HCT116 (cell line): ENCODE measurements at regions of chr3 and their contacts with region 1.

Region 1: GRCh38 chr3:14780927-14781507 is 37.7 kb upstream of the FGD5 start:
- DNase-seq: peak; percentile 74
- ATAC-seq: peak; percentile 100
- H3K4me3 ChIP-seq: no peak overlapping the region
- H3K27ac ChIP-seq: no peak overlapping the region
- H3K4me1 ChIP-seq: no peaks in the 10 kb centered on the region
- H3K27me3 ChIP-seq: no peaks in the 10 kb centered on the region
- CTCF ChIP-seq: peak; percentile 86 to 88 (median 88)
- POLR2A ChIP-seq: no peak
- RAD21 ChIP-seq: peak; percentile 89

Region 2: DNA sequence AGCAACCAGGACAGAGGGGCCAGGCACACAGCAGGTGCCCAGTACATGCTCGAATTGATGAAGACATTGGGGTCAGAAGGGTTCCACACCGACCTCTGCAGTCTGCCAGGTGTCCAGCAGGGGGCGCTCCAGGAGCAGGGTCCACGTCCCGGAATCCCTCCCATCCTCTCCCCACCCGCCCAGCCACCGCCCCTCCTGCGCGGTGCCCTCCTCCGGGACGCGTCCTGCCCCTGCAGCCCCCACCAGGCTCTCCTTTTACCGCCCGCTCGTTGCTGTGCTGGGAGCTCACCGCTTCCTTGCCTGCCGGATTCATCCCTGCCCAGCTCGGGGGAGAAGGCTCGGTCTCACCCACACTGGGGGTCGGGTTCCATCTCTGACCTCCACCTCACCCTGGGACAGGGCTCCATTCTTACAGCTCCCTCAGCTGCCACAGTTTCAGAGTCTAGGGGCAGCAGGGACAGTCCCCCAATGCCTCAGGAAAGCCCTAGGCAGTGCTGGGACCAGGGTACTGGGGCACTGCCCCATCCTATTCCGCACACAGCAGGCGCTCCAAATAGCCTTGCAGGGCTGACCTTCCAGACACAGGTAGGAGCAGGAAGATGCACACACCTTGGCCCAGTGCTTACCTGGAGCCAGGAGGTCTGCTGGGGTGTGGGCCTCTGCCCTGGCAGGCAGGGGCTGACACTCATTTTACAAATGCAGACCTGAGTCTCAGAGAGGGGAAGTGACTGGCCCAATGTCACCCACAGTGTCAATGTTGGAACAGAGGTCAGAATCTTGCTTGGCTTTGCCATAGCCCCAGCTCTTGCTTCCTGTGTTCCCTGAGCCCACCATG is 271.8 kb before region 1 on chr3:
- CTCF ChIA-PET with region 1: no interaction called
- POLR2A ChIA-PET with region 1: no interaction called
- RAD21 ChIA-PET with region 1: no interaction called
- intact Hi-C with region 1: loop called (anchors 5 kb)
- DNase-seq: peak; percentile 46
- ATAC-seq: peak; percentile 92
- H3K4me3 ChIP-seq: no peak overlapping the region
- H3K27ac ChIP-seq: no peak overlapping the region
- H3K4me1 ChIP-seq: peaks cover 0 to 4% of the 10 kb centered on the region in 2 experiments; a peak in 1 of 4 replicates
- H3K27me3 ChIP-seq: no peaks in the 10 kb centered on the region
- CTCF ChIP-seq: peak; percentile 71 to 85 (median 74)
- POLR2A ChIP-seq: no peak
- RAD21 ChIP-seq: peak; percentile 84

Region 3: DNA sequence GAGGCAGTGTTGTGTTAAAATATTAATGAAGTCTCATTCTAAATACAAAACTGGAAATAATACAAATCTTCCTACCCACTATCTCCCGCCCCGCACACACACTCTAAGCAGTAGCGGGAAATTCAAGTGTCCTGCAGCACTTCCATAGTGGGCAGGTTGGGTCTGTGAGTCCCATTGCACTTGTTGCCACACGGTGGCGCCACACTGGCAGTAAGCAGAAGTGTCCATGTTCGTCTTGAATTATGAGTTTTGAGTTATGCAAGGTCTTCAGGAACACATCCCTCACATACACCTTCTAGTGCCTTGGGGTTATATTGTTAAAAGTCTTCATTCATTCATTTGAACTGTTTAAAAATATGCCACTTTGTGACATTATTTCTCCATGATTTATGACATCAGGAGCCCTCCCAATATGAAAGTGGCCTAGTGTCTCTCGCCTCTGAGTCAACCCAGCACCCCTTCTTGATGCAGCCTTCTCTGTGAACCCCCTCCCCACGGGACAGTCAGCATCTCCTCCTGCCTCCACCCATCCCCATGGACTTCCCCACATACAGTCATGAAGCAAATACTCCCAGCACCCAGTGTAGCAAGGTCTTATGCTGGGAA is 147.1 kb before region 1 on chr3:
- CTCF ChIA-PET with region 1: interaction called, 5 read pairs
- POLR2A ChIA-PET with region 1: no interaction called
- RAD21 ChIA-PET with region 1: no interaction called
- intact Hi-C with region 1: loop called (anchors 1 kb)
- DNase-seq: peak; percentile 67
- ATAC-seq: peak; percentile 97
- H3K4me3 ChIP-seq: no peak overlapping the region
- H3K27ac ChIP-seq: no peak overlapping the region
- H3K4me1 ChIP-seq: no peaks in the 10 kb centered on the region
- H3K27me3 ChIP-seq: peaks cover 15% of the 10 kb centered on the region
- CTCF ChIP-seq: peak; percentile 72 to 97 (median 91); a peak in 5 of 6 replicates
- POLR2A ChIP-seq: no peak
- RAD21 ChIP-seq: peak; percentile 63

Region 4: DNA sequence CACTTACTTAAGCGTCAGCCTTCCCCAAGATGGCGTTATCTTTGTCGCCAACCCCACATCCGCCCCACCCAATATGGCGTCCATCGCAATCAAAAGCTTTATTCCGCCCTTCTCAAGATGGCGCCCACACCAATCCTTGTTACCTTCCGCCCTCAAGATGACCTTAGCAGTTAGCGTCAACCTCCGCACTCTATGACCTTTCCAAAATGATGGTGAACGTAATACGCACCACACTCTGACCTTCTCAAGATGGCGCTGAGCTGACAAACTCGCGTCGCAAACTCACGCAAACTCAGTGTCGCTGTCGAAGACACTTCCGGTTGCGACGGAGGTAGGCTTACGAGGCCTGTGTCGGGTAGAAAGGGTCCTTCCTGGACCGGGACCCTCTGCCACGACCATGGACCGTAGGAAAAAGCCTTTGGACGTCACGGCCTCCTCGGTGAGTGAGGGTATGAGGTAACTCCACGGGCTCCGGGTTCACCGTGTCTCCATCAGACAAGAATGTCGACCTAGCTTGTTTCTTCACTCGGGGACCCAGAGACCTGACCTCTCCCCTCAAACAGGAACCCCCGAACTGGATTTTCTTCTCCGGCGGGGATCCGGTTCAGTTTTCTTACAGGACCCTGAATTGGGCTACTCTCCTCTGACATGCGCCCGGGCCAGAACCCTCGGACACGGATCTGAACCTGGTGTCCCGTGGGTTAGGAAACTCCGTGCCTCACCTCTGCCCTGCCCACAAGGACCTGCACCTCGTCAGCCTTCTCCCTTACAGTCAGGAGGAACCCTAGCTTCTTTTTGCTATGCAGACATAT is 129.4 kb before region 1 on chr3 and contains the start of gene CCDC174:
- CTCF ChIA-PET with region 1: interaction called, 14 read pairs
- POLR2A ChIA-PET with region 1: no interaction called
- RAD21 ChIA-PET with region 1: no interaction called
- intact Hi-C with region 1: no loop called
- DNase-seq: peak; percentile 99
- ATAC-seq: peak; percentile 95
- H3K4me3 ChIP-seq: peak within 1 kb of the TSS; percentile 70 to 98
- H3K27ac ChIP-seq: peak within 1 kb of the TSS; percentile 60
- H3K4me1 ChIP-seq: peaks cover 3 to 16% of the 10 kb centered on the region in 2 experiments; a peak in 3 of 4 replicates
- H3K27me3 ChIP-seq: no peaks in the 10 kb centered on the region
- CTCF ChIP-seq: no peak
- POLR2A ChIP-seq: peak; percentile 63
- RAD21 ChIP-seq: no peak
- total RNA-seq, gene CCDC174: 15.6 TPM

Region 5: GRCh38 chr3:14672588-14672987 is 108.4 kb before region 1 on chr3:
- CTCF ChIA-PET with region 1: interaction called, 58 read pairs
- POLR2A ChIA-PET with region 1: interaction called, 4 read pairs
- RAD21 ChIA-PET with region 1: interaction called in 1 of 2 experiments, 5 read pairs
- intact Hi-C with region 1: loop called (anchors 2 kb)
- DNase-seq: no peak
- ATAC-seq: no peak
- H3K4me3 ChIP-seq: no peak overlapping the region
- H3K27ac ChIP-seq: no peak overlapping the region
- H3K4me1 ChIP-seq: no peaks in the 10 kb centered on the region
- H3K27me3 ChIP-seq: no peaks in the 10 kb centered on the region
- CTCF ChIP-seq: no peak
- POLR2A ChIP-seq: no peak
- RAD21 ChIP-seq: no peak

Region 6: DNA sequence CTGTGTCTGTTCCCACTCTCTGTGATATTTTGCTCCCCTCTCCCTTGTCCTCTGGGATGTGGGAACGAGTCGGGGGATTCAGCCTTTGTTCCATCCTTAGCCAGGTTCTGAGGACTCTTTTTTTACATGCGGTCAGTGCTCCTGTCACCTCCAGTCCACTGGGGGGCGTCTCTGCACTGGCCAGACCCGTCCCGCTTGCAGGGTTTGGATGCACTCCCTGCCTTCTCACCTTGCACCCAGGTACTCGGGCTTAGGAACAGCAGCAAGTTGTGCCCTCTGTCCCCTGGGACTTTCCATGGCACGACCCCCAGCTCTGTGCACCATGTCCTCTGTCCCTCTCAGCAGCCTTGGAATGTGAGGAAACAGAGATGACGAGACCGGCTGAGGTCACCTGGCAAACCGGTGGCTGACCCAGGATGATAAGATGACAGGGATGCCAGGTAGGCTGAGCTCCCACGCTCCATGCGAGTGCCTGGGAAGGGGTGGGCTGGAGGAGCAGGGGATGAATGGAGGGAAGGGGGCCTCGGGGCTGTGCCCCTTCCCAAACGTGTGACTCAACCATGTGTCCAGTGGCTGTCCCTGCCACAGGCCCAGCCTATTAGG is 10.4 kb after region 1 on chr3:
- CTCF ChIA-PET with region 1: interaction called, 10 read pairs
- POLR2A ChIA-PET with region 1: no interaction called
- RAD21 ChIA-PET with region 1: no interaction called
- intact Hi-C with region 1: no loop called
- DNase-seq: peak; percentile 37
- ATAC-seq: peak; percentile 98
- H3K4me3 ChIP-seq: peak overlapping the region; percentile 47 to 53
- H3K27ac ChIP-seq: no peak overlapping the region
- H3K4me1 ChIP-seq: peaks cover 0 to 8% of the 10 kb centered on the region in 2 experiments; a peak in 1 of 4 replicates
- H3K27me3 ChIP-seq: no peaks in the 10 kb centered on the region
- CTCF ChIP-seq: peak; percentile 88 to 93 (median 88)
- POLR2A ChIP-seq: no peak
- RAD21 ChIP-seq: peak; percentile 94